ENCODE measurements at regions of chr11 and their contacts with region 1.

Region 1: DNA sequence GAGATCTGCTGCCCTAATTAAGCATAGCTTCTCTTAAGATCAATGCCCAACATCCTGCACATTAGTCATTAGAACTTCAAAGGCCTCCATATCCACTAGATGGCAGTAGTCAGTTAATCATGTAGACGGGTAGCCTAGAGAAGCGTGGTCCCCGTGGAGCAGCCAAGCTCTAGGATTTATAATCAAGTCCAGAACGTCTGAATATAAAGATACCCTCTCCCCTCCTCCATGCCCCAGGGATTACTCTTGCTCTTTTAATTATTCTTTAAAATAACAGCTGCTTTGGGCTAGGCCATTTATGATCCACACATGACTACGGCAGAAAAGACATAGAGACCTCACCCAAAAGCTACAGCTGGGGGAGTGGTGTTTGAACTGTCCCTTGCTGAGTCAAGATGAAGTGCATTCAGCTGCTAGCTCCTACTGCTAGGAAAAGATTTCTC is 327.6 kb upstream of the PLET1 start:
- DNase-seq: peak; percentile 50
- H3K4me3 Mint-ChIP-seq: no peak overlapping the region
- H3K27ac Mint-ChIP-seq: no peak overlapping the region
- H3K4me1 Mint-ChIP-seq: peaks cover 2% of the 10 kb centered on the region
- H3K27me3 Mint-ChIP-seq: no peaks in the 10 kb centered on the region

Region 2: GRCh38 chr11:112599856-112600533 is 11.7 kb after region 1 on chr11:
- CTCF ChIA-PET with region 1: interaction called, 20 read pairs
- POLR2A ChIA-PET with region 1: no interaction called
- intact Hi-C with region 1: no loop called
- DNase-seq: no peak
- H3K4me3 Mint-ChIP-seq: no peak overlapping the region
- H3K27ac Mint-ChIP-seq: no peak overlapping the region
- H3K4me1 Mint-ChIP-seq: peaks cover 5% of the 10 kb centered on the region
- H3K27me3 Mint-ChIP-seq: peaks cover 4% of the 10 kb centered on the region

Region 3: GRCh38 chr11:112707681-112708080 is 119.4 kb after region 1 on chr11:
- CTCF ChIA-PET with region 1: no interaction called
- POLR2A ChIA-PET with region 1: no interaction called
- intact Hi-C with region 1: no loop called
- DNase-seq: no peak
- H3K4me3 Mint-ChIP-seq: no peak overlapping the region
- H3K27ac Mint-ChIP-seq: no peak overlapping the region
- H3K4me1 Mint-ChIP-seq: no peaks in the 10 kb centered on the region
- H3K27me3 Mint-ChIP-seq: peaks cover 6% of the 10 kb centered on the region

Region 4: DNA sequence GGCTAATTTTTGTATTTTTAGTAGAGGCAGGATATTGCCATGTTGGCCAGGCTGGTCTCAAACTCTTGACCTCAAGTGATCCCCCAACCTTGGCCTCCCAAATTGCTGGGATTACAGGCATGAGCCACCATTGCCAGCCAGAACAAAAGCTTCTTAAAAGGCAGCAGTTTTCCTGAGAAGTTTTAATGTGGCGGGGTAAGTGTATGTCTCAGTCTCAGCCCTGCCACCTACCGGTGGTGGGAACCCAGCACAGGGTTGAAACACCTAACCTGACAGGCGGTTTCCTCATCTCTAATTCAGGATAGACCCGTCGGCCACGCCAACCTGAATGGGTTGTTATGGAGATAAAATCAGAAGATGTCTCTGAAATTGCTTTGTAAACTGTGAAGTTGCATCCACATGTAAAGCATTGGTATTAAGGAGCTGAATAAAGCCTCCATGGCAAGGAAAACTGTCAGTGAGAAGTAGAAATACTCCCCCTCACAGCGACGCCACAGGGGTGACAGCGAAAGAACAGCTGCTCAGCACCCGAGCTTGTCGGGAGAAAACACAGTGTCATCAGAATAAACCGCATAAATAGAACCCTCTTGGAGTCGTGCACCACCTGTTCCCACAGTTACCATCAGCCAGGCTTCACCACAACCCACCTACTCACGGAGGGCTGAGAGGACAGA is 207.0 kb after region 1 on chr11:
- CTCF ChIA-PET with region 1: interaction called, 19 read pairs
- POLR2A ChIA-PET with region 1: no interaction called
- intact Hi-C with region 1: loop called (anchors 1 kb)
- DNase-seq: peak; percentile 45
- H3K4me3 Mint-ChIP-seq: no peak overlapping the region
- H3K27ac Mint-ChIP-seq: no peak overlapping the region
- H3K4me1 Mint-ChIP-seq: peaks cover 11% of the 10 kb centered on the region
- H3K27me3 Mint-ChIP-seq: peaks cover 3% of the 10 kb centered on the region

Region 5: GRCh38 chr11:113289431-113290187 is 701.3 kb after region 1 on chr11:
- CTCF ChIA-PET with region 1: interaction called, 110 read pairs
- POLR2A ChIA-PET with region 1: no interaction called
- intact Hi-C with region 1: loop called (anchors 1 kb)
- DNase-seq: peak; percentile 79
- H3K4me3 Mint-ChIP-seq: no peak overlapping the region
- H3K27ac Mint-ChIP-seq: no peak overlapping the region
- H3K4me1 Mint-ChIP-seq: no peaks in the 10 kb centered on the region
- H3K27me3 Mint-ChIP-seq: peaks cover 11% of the 10 kb centered on the region